ENCODE measurements at regions of chr1 and their contacts with region 1.

Region 1: GRCh38 chr1:48677306-48678287 is 99.1 kb downstream of the BEND5 start:
- DNase-seq: peak in 7 of 9 experiments; percentile 7 to 51 (median 30)
- ATAC-seq: no peak
- H3K4me3 ChIP-seq: no peak overlapping the region
- H3K4me3 Mint-ChIP-seq: no peak overlapping the region
- H3K27ac ChIP-seq: no peak overlapping the region
- H3K27ac Mint-ChIP-seq: no peak overlapping the region
- H3K4me1 ChIP-seq: no peaks in the 10 kb centered on the region
- H3K4me1 Mint-ChIP-seq: no peaks in the 10 kb centered on the region
- H3K27me3 ChIP-seq: no peaks in the 10 kb centered on the region
- H3K27me3 Mint-ChIP-seq: peaks cover 24% of the 10 kb centered on the region
- CTCF ChIP-seq: peak; percentile 49

Region 2: DNA sequence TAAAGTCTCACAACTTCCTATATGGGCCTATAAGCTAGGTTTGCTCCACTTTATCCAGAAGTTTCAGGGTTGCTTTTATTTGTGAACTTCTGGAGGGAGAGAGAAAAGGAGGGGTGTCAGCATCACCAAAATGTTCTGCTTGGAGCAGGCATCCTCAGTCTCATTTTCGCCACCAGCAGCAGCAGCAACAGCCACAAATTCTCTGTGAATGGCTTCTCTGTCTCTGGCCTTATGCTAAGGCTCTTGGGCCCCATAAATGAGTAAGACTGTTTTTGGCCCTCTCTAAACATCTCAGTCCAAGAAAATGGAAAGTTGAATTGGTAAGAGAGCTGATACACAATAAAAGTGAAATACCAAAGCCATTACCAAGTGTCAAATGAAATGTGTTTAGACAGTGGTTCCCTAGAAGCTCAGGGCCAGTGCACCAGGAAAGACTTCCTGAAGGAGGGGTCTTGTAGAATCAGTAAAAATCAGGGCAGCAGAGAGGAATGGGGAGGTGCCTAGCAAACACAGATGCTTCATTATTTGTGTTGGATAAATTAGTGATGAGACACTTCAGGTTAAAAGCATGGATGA is 152.6 kb before region 1 on chr1:
- CTCF ChIA-PET with region 1: no interaction called
- POLR2A ChIA-PET with region 1: no interaction called
- intact Hi-C with region 1: no loop called
- DNase-seq: no peak
- ATAC-seq: no peak
- H3K4me3 ChIP-seq: no peak overlapping the region
- H3K4me3 Mint-ChIP-seq: no peak overlapping the region
- H3K27ac ChIP-seq: no peak overlapping the region
- H3K27ac Mint-ChIP-seq: no peak overlapping the region
- H3K4me1 ChIP-seq: no peaks in the 10 kb centered on the region
- H3K4me1 Mint-ChIP-seq: no peaks in the 10 kb centered on the region
- H3K27me3 ChIP-seq: no peaks in the 10 kb centered on the region
- H3K27me3 Mint-ChIP-seq: peaks cover 27% of the 10 kb centered on the region
- CTCF ChIP-seq: no peak

Region 3: GRCh38 chr1:48817505-48818114 is 140.0 kb after region 1 on chr1:
- CTCF ChIA-PET with region 1: interaction called, 5 read pairs
- POLR2A ChIA-PET with region 1: no interaction called
- intact Hi-C with region 1: loop called (anchors 2 to 5 kb)
- DNase-seq: peak in 2 of 9 experiments; percentile 11 to 20
- ATAC-seq: no peak
- H3K4me3 ChIP-seq: no peak overlapping the region
- H3K4me3 Mint-ChIP-seq: no peak overlapping the region
- H3K27ac ChIP-seq: no peak overlapping the region
- H3K27ac Mint-ChIP-seq: no peak overlapping the region
- H3K4me1 ChIP-seq: no peaks in the 10 kb centered on the region
- H3K4me1 Mint-ChIP-seq: no peaks in the 10 kb centered on the region
- H3K27me3 ChIP-seq: no peaks in the 10 kb centered on the region
- H3K27me3 Mint-ChIP-seq: peaks cover 5% of the 10 kb centered on the region
- CTCF ChIP-seq: no peak

Region 4: GRCh38 chr1:50348449-50349241 is 1671.0 kb after region 1 on chr1:
- CTCF ChIA-PET with region 1: no interaction called
- POLR2A ChIA-PET with region 1: no interaction called
- intact Hi-C with region 1: loop called in 1 of 2 experiments (anchors 2 kb)
- DNase-seq: peak in 5 of 9 experiments; percentile 10 to 61 (median 32)
- ATAC-seq: no peak
- H3K4me3 ChIP-seq: no peak overlapping the region
- H3K4me3 Mint-ChIP-seq: no peak overlapping the region
- H3K27ac ChIP-seq: no peak overlapping the region
- H3K27ac Mint-ChIP-seq: no peak overlapping the region
- H3K4me1 ChIP-seq: no peaks in the 10 kb centered on the region
- H3K4me1 Mint-ChIP-seq: no peaks in the 10 kb centered on the region
- H3K27me3 ChIP-seq: no peaks in the 10 kb centered on the region
- H3K27me3 Mint-ChIP-seq: peaks cover 23% of the 10 kb centered on the region
- CTCF ChIP-seq: peak; percentile 69

Measured in CD8-positive, alpha-beta T cell (primary cell).